Ovary (tissue), 10 donors: ENCODE measurements at regions of chr1 and their contacts with region 1.

Region 1: DNA sequence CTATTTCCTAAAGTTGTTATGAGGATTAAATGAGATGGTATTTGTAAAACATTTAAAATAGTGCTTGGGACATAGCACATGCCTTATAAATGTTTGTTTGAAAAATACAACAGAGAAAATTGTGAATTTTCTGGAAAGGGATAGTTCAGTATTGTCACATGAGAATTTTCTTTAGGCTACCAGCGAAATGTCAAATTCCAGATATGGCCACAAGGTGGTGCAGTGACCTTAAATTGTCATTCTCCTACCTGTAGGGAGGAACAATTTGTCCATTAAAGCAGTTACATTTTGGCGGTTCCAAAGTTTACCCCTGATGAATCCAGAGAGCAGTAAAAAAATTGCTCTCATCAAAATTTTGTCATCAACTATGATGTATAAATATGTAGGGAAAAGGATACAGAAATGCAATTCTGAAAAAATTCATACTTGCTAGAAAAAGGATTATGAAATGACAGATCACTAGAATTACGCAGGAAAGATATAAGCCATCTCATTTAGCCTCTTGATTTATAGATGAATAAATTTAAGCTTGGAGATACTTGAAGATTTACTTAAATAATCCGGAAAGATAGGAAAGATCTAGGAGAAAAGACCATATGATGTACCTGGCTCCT is 50.2 kb upstream of the TSHB start:
- DNase-seq: peak in 3 of 5 donors; percentile 26 to 61 (median 41)
- H3K4me3 ChIP-seq: no peak overlapping the region
- H3K27ac ChIP-seq: no peak overlapping the region
- H3K4me1 ChIP-seq: no peaks in the 10 kb centered on the region
- H3K27me3 ChIP-seq: no peaks in the 10 kb centered on the region
- CTCF ChIP-seq: peak in 2 of 3 donors; percentile 59 to 62
- EP300 ChIP-seq: no peak
- POLR2A ChIP-seq: no peak

Region 2: GRCh38 chr1:115112496-115113375 is 133.4 kb after region 1 on chr1:
- intact Hi-C with region 1: loop called (anchors 5 to 10 kb)
- DNase-seq: peak in 3 of 5 donors; percentile 34 to 50 (median 43)
- H3K4me3 ChIP-seq: no peak overlapping the region
- H3K27ac ChIP-seq: no peak overlapping the region
- H3K4me1 ChIP-seq: no peaks in the 10 kb centered on the region
- H3K27me3 ChIP-seq: no peaks in the 10 kb centered on the region
- CTCF ChIP-seq: peak; percentile 37 to 69 (median 67)
- EP300 ChIP-seq: no peak
- POLR2A ChIP-seq: no peak

Region 3: GRCh38 chr1:115595279-115596079 is 616.1 kb after region 1 on chr1:
- intact Hi-C with region 1: loop called in 2 of 4 experiments (anchors 10 kb)
- DNase-seq: peak; percentile 78 to 90 (median 89)
- H3K4me3 ChIP-seq: no peak overlapping the region
- H3K27ac ChIP-seq: no peak overlapping the region
- H3K4me1 ChIP-seq: no peaks in the 10 kb centered on the region
- H3K27me3 ChIP-seq: no peaks in the 10 kb centered on the region
- CTCF ChIP-seq: peak; percentile 76 to 80 (median 79)
- EP300 ChIP-seq: no peak
- POLR2A ChIP-seq: no peak